ENCODE measurements at regions of chr19 and their contacts with region 1.

Region 1: DNA sequence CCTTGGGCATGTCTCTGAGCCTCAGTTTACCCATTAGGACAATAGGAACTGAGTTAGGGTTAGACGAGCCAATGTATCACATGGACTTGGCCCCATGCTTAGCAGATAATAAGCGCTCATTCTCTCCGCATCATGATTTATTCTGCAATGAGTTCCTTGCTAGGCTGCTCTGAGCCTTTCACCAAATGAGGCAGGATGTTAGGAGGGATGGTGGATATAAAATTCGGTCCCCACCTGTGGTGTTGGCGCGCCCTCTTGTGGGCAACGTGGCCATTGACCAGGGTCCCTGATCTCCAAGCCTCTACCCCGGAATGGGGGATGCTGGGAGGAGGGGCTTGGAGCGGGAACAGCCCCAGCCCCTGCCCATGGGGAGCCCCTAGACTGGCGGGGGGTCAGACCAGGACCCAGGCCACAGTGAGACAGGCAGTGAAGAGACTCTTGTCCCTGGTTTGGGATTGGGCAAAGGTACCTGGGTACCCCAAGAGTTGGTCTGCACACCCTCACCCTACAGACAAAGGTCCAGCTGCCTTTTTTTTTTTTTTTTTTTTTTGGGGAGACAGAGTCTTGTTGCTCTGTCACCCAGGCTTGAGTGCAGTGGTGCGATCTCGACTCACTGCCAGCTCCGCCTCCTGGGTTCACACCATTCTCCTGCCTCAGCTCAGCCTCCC is 43.9 kb downstream of the CERS4 start:
- DNase-seq: peak; percentile 66
- H3K4me3 ChIP-seq: no peak overlapping the region
- H3K27ac ChIP-seq: no peak overlapping the region
- H3K4me1 ChIP-seq: no peaks in the 10 kb centered on the region
- H3K27me3 ChIP-seq: no peaks in the 10 kb centered on the region
- CTCF ChIP-seq: peak; percentile 81 to 95 (median 92)
- POLR2A ChIP-seq: no peak

Region 2: DNA sequence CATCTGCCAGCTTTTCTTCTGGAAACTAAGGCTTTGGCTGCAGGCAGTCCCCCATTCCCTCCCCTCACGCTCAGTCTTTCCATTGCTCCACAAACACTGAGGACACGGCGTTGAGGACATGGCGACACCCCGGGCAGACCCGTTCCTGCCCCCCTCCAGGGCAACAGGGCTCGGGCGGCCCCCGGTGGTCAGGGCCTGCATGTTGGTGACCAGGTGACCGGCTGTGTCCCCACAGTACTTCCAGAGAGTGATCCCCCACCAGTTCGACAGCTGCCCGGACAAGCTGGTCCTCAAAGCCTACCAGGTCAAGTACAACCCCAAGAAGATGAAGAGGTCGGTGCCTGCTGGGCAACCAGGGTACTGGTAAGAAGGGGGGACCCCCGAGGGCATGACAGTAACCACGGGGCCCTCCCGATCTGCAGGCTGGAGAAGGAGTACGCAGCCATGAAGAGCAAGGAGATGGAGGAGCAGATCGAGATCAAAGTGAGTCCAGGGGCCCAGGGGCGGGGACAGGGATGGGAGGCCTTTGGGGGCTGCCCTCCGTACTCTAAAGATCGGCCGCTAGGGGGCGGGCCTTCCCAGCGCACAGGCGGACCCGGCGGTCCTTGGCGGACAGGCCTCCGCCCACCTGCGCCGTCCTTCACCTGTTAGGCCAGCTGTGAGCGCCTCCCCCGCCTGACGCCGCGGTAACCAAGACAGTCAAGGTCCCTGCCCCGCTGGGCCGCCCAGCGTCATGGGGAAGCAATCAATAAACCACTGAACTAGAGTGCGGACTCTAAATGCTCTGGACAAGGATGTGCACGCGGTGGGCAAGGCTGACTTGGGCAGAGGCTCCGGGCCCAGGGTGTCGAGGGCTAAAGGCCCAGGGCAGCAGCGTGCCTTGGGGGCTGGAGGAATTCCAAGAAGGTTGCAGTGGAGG is 399.9 kb before region 1 on chr19:
- intact Hi-C with region 1: loop called (anchors 10 kb)
- DNase-seq: peak; percentile 74
- H3K4me3 ChIP-seq: no peak overlapping the region
- H3K27ac ChIP-seq: no peak overlapping the region
- H3K4me1 ChIP-seq: no peaks in the 10 kb centered on the region
- H3K27me3 ChIP-seq: no peaks in the 10 kb centered on the region
- CTCF ChIP-seq: peak; percentile 83 to 90 (median 90)
- POLR2A ChIP-seq: no peak

Region 3: DNA sequence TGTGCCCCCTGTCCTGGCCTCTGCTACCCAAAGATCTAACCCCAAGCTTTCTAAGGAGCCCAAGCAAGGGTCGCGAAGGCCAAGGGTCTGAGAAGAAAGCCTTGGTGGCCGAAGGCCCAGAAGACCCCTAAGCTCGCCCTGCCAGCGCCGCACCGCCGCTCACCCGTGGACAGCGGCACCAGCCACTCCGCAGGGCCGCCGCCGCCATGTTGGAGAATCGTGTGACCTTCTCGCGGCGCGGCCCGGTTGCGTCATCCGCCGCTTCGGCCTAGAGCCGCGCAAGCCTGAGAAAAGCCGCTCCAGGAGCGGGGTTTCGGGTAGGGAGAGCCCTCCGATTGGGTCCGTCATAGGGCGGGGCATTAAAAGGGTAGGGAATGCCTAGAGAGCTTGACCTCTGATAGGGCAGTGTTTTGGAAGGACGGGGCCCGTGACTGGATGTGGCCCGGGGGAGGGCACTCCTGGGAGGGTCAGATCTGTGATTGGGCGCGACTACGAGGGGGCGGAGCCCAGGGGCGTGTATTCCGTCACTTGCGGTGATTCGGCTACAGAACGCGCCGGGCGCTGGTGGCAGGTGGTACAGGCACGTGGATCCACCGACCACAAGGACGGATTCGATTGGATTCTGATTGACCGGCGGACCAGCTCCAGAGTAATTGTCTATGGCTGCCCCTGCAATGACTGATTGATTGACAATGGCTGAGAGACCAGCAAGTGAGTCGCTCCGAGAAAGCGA is 309.4 kb before region 1 on chr19 and contains the start of gene TIMM44:
- intact Hi-C with region 1: loop called (anchors 2 kb)
- DNase-seq: peak; percentile 99
- H3K4me3 ChIP-seq: peak within 1 kb of the TSS; percentile 89 to 93
- H3K27ac ChIP-seq: peak within 1 kb of the TSS; percentile 95 to 97
- H3K4me1 ChIP-seq: no peaks in the 10 kb centered on the region
- H3K27me3 ChIP-seq: no peaks in the 10 kb centered on the region
- CTCF ChIP-seq: no peak
- POLR2A ChIP-seq: peak; percentile 66
- total RNA-seq, gene TIMM44: 47.3 to 83.4 TPM

Region 4: GRCh38 chr19:8005534-8006256 is 247.4 kb before region 1 on chr19 and contains the start of gene ELAVL1:
- intact Hi-C with region 1: loop called (anchors 10 kb)
- DNase-seq: peak; percentile 86
- H3K4me3 ChIP-seq: peak within 1 kb of the TSS; percentile 70
- H3K27ac ChIP-seq: peak within 1 kb of the TSS; percentile 69 to 74
- H3K4me1 ChIP-seq: peaks cover 19% of the 10 kb centered on the region
- H3K27me3 ChIP-seq: no peaks in the 10 kb centered on the region
- CTCF ChIP-seq: peak in 1 of 4 experiments; percentile 14
- POLR2A ChIP-seq: peak; percentile 32
- total RNA-seq, gene ELAVL1: 35.6 to 76.9 TPM

Region 5: GRCh38 chr19:8158411-8159074 is 94.5 kb before region 1 on chr19:
- intact Hi-C with region 1: loop called (anchors 1 kb)
- DNase-seq: peak; percentile 68
- H3K4me3 ChIP-seq: no peak overlapping the region
- H3K27ac ChIP-seq: no peak overlapping the region
- H3K4me1 ChIP-seq: peaks cover 4% of the 10 kb centered on the region
- H3K27me3 ChIP-seq: no peaks in the 10 kb centered on the region
- CTCF ChIP-seq: peak; percentile 24 to 86 (median 78)
- POLR2A ChIP-seq: no peak

Region 6: GRCh38 chr19:8307965-8308866 is 55.2 kb after region 1 on chr19 and contains the start of gene CD320:
- intact Hi-C with region 1: loop called (anchors 5 kb)
- DNase-seq: peak; percentile 89
- H3K4me3 ChIP-seq: peak within 1 kb of the TSS; percentile 50 to 60
- H3K27ac ChIP-seq: peak within 1 kb of the TSS; percentile 54 to 66
- H3K4me1 ChIP-seq: peaks cover 12% of the 10 kb centered on the region
- H3K27me3 ChIP-seq: no peaks in the 10 kb centered on the region
- CTCF ChIP-seq: peak in 1 of 4 experiments; percentile 26
- POLR2A ChIP-seq: peak; percentile 51
- total RNA-seq, gene CD320: 50.8 to 91.4 TPM